ENCODE measurements at regions of chr7 and their contacts with region 1.

Region 1: GRCh38 chr7:137146012-137146455 is 197.5 kb downstream of the PTN start:
- DNase-seq: peak; percentile 95
- ATAC-seq: peak; percentile 86
- H3K4me3 ChIP-seq: no peak overlapping the region
- H3K27ac ChIP-seq: no peak overlapping the region
- H3K4me1 ChIP-seq: peaks cover 23% of the 10 kb centered on the region
- H3K27me3 ChIP-seq: no peaks in the 10 kb centered on the region
- CTCF ChIP-seq: no peak
- POLR2A ChIP-seq: no peak
- RAD21 ChIP-seq: peak; percentile 26; the same call in 1 of the 2 replicates

Region 2: GRCh38 chr7:136947347-136947746 is 198.7 kb before region 1 on chr7:
- CTCF ChIA-PET with region 1: no interaction called
- POLR2A ChIA-PET with region 1: no interaction called
- dilution Hi-C with region 1: no loop called
- in situ Hi-C with region 1: no loop called
- intact Hi-C with region 1: loop called (anchors 5 kb)
- DNase-seq: peak; percentile 63
- ATAC-seq: no peak
- H3K4me3 ChIP-seq: no peak overlapping the region
- H3K27ac ChIP-seq: no peak overlapping the region
- H3K4me1 ChIP-seq: peaks cover 17% of the 10 kb centered on the region
- H3K27me3 ChIP-seq: no peaks in the 10 kb centered on the region
- CTCF ChIP-seq: no peak
- POLR2A ChIP-seq: no peak
- RAD21 ChIP-seq: no peak

Region 3: DNA sequence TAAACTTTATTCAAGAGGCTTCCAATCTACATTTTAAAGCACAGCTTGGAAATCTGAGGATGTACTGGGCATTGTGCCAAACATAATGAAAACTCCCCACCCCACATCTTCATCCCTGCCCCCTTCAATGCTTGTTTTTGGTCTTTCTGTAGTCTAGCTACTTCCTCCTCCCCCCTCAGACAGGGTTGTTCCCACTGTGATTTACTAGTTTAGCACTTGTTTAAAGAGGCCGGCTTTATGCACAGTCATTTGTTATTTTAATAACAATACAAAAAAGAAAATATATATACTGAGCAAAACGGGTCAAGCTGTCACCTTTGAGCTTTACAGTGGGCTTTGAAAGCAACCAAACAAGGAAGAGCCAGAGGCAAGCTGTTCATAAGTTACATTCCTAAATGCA is 145.0 kb before region 1 on chr7:
- CTCF ChIA-PET with region 1: no interaction called
- POLR2A ChIA-PET with region 1: no interaction called
- dilution Hi-C with region 1: no loop called
- in situ Hi-C with region 1: no loop called
- intact Hi-C with region 1: loop called (anchors 5 kb)
- DNase-seq: peak; percentile 55
- ATAC-seq: peak; percentile 52
- H3K4me3 ChIP-seq: no peak overlapping the region
- H3K27ac ChIP-seq: peak overlapping the region; percentile 97
- H3K4me1 ChIP-seq: peaks cover 29% of the 10 kb centered on the region
- H3K27me3 ChIP-seq: no peaks in the 10 kb centered on the region
- CTCF ChIP-seq: no peak
- POLR2A ChIP-seq: no peak
- RAD21 ChIP-seq: no peak

Region 4: DNA sequence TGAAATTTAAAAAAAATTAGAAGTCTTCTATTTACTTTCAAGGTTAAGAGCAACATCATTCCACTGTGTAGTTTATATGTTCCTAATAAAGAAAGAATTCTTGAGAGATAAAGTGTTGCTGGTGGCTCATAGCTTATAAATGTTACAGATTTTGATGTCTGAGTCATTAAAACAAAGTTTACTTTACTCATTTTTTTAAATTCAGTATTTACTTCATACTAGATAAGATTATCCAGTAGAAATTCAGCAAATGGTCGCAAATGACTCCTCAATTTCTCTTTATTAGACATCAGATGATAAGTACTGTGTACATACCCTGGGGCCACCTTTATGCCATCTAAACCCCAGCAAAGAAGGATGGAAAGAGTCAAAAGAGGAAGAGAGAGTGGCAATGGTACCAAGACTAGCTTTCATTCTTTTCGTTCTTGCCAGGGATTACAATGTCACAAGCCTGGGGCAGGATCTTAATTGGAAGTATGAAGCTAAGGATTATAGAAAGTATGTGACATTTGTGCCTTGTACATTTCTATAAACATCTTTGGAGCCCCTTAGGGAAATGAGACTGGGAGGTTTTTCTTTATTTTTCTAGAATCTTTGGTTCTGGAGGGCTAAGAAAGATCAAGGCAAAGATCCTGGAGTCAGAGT is 71.5 kb before region 1 on chr7:
- CTCF ChIA-PET with region 1: no interaction called
- POLR2A ChIA-PET with region 1: interaction called, 3 read pairs
- dilution Hi-C with region 1: no loop called
- in situ Hi-C with region 1: no loop called
- intact Hi-C with region 1: loop called (anchors 1 kb)
- DNase-seq: peak; percentile 87
- ATAC-seq: peak; percentile 77
- H3K4me3 ChIP-seq: peak overlapping the region; percentile 46; the same call in 1 of the 2 replicates
- H3K27ac ChIP-seq: peak overlapping the region; percentile 100
- H3K4me1 ChIP-seq: peaks cover 18% of the 10 kb centered on the region
- H3K27me3 ChIP-seq: no peaks in the 10 kb centered on the region
- CTCF ChIP-seq: no peak
- POLR2A ChIP-seq: no peak
- RAD21 ChIP-seq: no peak

Region 5: GRCh38 chr7:137096607-137097006 is 49.4 kb before region 1 on chr7:
- CTCF ChIA-PET with region 1: no interaction called
- POLR2A ChIA-PET with region 1: no interaction called
- dilution Hi-C with region 1: no loop called
- in situ Hi-C with region 1: no loop called
- intact Hi-C with region 1: no loop called
- DNase-seq: peak; percentile 52
- ATAC-seq: no peak
- H3K4me3 ChIP-seq: no peak overlapping the region
- H3K27ac ChIP-seq: no peak overlapping the region
- H3K4me1 ChIP-seq: no peaks in the 10 kb centered on the region
- H3K27me3 ChIP-seq: no peaks in the 10 kb centered on the region
- CTCF ChIP-seq: no peak
- POLR2A ChIP-seq: no peak
- RAD21 ChIP-seq: no peak

Region 6: DNA sequence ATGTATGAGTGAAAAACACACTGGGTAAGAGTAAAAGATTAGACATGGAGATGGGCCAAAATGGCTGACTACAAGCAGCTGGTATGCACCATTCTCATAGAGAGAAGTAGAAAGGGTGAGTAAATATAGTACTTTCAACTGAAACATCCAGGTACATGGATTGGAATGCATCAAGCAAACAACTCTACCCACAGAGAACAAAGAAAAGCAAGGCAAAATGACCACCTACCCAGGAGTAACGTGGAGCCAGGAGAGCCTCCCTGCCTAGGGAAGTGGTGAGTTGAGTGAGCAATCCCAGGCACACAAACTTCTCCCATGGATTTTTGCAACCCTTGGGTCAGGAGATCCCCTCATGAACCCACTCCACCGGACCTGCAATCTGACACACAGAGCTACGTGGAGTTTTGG is 15.3 kb before region 1 on chr7:
- CTCF ChIA-PET with region 1: no interaction called
- POLR2A ChIA-PET with region 1: no interaction called
- dilution Hi-C with region 1: no loop called
- in situ Hi-C with region 1: no loop called
- intact Hi-C with region 1: no loop called
- DNase-seq: peak; percentile 82
- ATAC-seq: peak; percentile 82
- H3K4me3 ChIP-seq: no peak overlapping the region
- H3K27ac ChIP-seq: peak overlapping the region; percentile 61
- H3K4me1 ChIP-seq: peaks cover 16% of the 10 kb centered on the region
- H3K27me3 ChIP-seq: no peaks in the 10 kb centered on the region
- CTCF ChIP-seq: no peak
- POLR2A ChIP-seq: no peak
- RAD21 ChIP-seq: no peak

Region 7: GRCh38 chr7:137992550-137993394 is 846.7 kb after region 1 on chr7:
- CTCF ChIA-PET with region 1: no interaction called
- POLR2A ChIA-PET with region 1: no interaction called
- dilution Hi-C with region 1: no loop called
- in situ Hi-C with region 1: loop called (anchors 25 kb)
- intact Hi-C with region 1: no loop called
- DNase-seq: peak; percentile 97
- ATAC-seq: peak; percentile 65
- H3K4me3 ChIP-seq: no peak overlapping the region
- H3K27ac ChIP-seq: peak overlapping the region; percentile 52
- H3K4me1 ChIP-seq: peaks cover 25% of the 10 kb centered on the region
- H3K27me3 ChIP-seq: no peaks in the 10 kb centered on the region
- CTCF ChIP-seq: no peak
- POLR2A ChIP-seq: peak; percentile 21
- RAD21 ChIP-seq: no peak

Measured in IMR-90 (cell line).